ENCODE measurements at regions of chr19 and their contacts with region 1.

Region 1: GRCh38 chr19:14674764-14675163 is at the start of gene ADGRE3:
- DNase-seq: peak; percentile 67
- ATAC-seq: peak; percentile 69
- H3K4me3 ChIP-seq: peak within 1 kb of the TSS in 1 of 5 experiments; percentile 72
- H3K4me3 Mint-ChIP-seq: peak within 1 kb of the TSS; percentile 77
- H3K27ac ChIP-seq: peak within 1 kb of the TSS in 1 of 2 donors; percentile 12
- H3K27ac Mint-ChIP-seq: peak within 1 kb of the TSS; percentile 88
- H3K4me1 ChIP-seq: peaks cover 24 to 31% of the 10 kb centered on the region in 2 donors
- H3K4me1 Mint-ChIP-seq: peaks cover 29% of the 10 kb centered on the region
- H3K27me3 ChIP-seq: no peaks in the 10 kb centered on the region
- H3K27me3 Mint-ChIP-seq: no peaks in the 10 kb centered on the region
- CTCF ChIP-seq: no peak
- total RNA-seq, gene ADGRE3: 0.17 TPM in 1 of 2 replicates, not detected in the other

Region 2: GRCh38 chr19:14632279-14632678 is 42.5 kb before region 1 on chr19:
- CTCF ChIA-PET with region 1: no interaction called
- POLR2A ChIA-PET with region 1: no interaction called
- intact Hi-C with region 1: loop called (anchors 5 kb)
- DNase-seq: peak; percentile 67
- ATAC-seq: peak; percentile 67
- H3K4me3 ChIP-seq: no peak overlapping the region
- H3K4me3 Mint-ChIP-seq: no peak overlapping the region
- H3K27ac ChIP-seq: no peak overlapping the region
- H3K27ac Mint-ChIP-seq: no peak overlapping the region
- H3K4me1 ChIP-seq: peaks cover 9 to 11% of the 10 kb centered on the region in 2 donors
- H3K4me1 Mint-ChIP-seq: peaks cover 18% of the 10 kb centered on the region
- H3K27me3 ChIP-seq: no peaks in the 10 kb centered on the region
- H3K27me3 Mint-ChIP-seq: no peaks in the 10 kb centered on the region
- CTCF ChIP-seq: no peak

Region 3: GRCh38 chr19:14648506-14648905 is 26.3 kb before region 1 on chr19:
- CTCF ChIA-PET with region 1: no interaction called
- POLR2A ChIA-PET with region 1: no interaction called
- intact Hi-C with region 1: no loop called
- DNase-seq: no peak
- ATAC-seq: no peak
- H3K4me3 ChIP-seq: no peak overlapping the region
- H3K4me3 Mint-ChIP-seq: no peak overlapping the region
- H3K27ac ChIP-seq: no peak overlapping the region
- H3K27ac Mint-ChIP-seq: no peak overlapping the region
- H3K4me1 ChIP-seq: no peaks in the 10 kb centered on the region
- H3K4me1 Mint-ChIP-seq: peaks cover 5% of the 10 kb centered on the region
- H3K27me3 ChIP-seq: no peaks in the 10 kb centered on the region
- H3K27me3 Mint-ChIP-seq: peaks cover 5% of the 10 kb centered on the region
- CTCF ChIP-seq: no peak

Region 4: GRCh38 chr19:14661372-14661924 is 13.3 kb before region 1 on chr19:
- CTCF ChIA-PET with region 1: interaction called, 4 read pairs
- POLR2A ChIA-PET with region 1: interaction called, 10 read pairs
- intact Hi-C with region 1: no loop called
- DNase-seq: no peak
- ATAC-seq: no peak
- H3K4me3 ChIP-seq: no peak overlapping the region
- H3K4me3 Mint-ChIP-seq: no peak overlapping the region
- H3K27ac ChIP-seq: no peak overlapping the region
- H3K27ac Mint-ChIP-seq: no peak overlapping the region
- H3K4me1 ChIP-seq: peaks cover 8% of the 10 kb centered on the region in 2 donors
- H3K4me1 Mint-ChIP-seq: peaks cover 13% of the 10 kb centered on the region
- H3K27me3 ChIP-seq: no peaks in the 10 kb centered on the region
- H3K27me3 Mint-ChIP-seq: no peaks in the 10 kb centered on the region
- CTCF ChIP-seq: no peak

Region 5: DNA sequence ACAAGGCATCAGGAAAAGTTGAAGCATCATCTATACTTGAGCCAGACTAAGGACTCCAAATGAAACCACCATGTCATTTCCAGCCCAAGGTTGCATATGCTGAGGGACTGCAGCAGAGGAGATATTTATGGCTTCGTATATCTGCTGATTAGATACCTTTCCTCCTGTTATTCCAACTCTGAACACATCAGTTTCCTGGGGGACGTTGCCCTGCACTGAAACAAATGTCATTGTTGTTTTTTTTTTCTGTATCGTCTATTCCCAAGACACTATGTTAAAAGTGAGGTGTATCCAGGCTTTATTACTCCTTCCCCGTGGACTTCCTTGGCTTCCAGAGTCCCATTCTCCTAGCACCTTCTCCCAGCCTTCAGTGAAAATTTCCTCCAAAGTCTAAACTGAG is 211.3 kb after region 1 on chr19 and contains the start of gene OR7A17:
- CTCF ChIA-PET with region 1: no interaction called
- POLR2A ChIA-PET with region 1: no interaction called
- intact Hi-C with region 1: no loop called
- DNase-seq: no peak
- ATAC-seq: no peak
- H3K4me3 ChIP-seq: no peak within 1 kb of the TSS
- H3K4me3 Mint-ChIP-seq: no peak within 1 kb of the TSS
- H3K27ac ChIP-seq: no peak within 1 kb of the TSS
- H3K27ac Mint-ChIP-seq: peak within 1 kb of the TSS; percentile 62
- H3K4me1 ChIP-seq: peaks cover 21 to 22% of the 10 kb centered on the region in 2 donors
- H3K4me1 Mint-ChIP-seq: peaks cover 40% of the 10 kb centered on the region
- H3K27me3 ChIP-seq: peaks cover 0 to 5% (median 1%) of the 10 kb centered on the region in 4 experiments
- H3K27me3 Mint-ChIP-seq: peaks cover 13% of the 10 kb centered on the region
- CTCF ChIP-seq: no peak
- total RNA-seq, gene OR7A17: not detected in 2 replicates

Measured in B cell (primary cell).